A549 (cell line): ENCODE measurements at regions of chr20 and their contacts with region 1.

Region 1: GRCh38 chr20:44111712-44112335 is 75.2 kb downstream of the JPH2 start:
- DNase-seq: no peak
- ATAC-seq: no peak
- H3K4me3 ChIP-seq: no peak overlapping the region
- H3K27ac ChIP-seq: no peak overlapping the region; a peak in 1 of 6 replicates
- H3K4me1 ChIP-seq: no peaks in the 10 kb centered on the region; the same call in 2 of the 3 replicates
- CTCF ChIP-seq: no peak
- EP300 ChIP-seq: no peak
- POLR2A ChIP-seq: no peak
- RAD21 ChIP-seq: no peak

Region 2: DNA sequence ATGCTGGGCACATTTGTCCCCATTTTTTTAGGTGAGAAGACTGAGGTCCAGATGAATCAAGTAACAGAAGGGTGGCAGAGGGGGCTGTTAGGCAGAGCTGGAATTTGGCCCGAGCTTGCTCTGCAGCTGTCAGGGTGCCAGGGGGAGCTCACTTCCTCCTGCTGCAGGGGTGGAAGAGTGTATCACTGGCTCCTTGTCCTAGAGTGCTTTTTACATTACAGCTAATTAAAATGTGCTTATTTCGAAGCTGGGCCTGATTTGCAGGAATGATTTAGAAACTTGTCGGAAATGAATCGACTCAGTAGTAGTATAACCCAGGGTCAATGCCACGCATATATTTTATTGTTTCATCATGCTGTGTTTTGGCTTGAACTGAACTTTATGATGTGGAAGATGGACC is 186.0 kb before region 1 on chr20:
- CTCF ChIA-PET with region 1: no interaction called
- POLR2A ChIA-PET with region 1: no interaction called
- DNase-seq: no peak
- ATAC-seq: peak in 1 of 2 experiments; percentile 67; a peak in 3 of 6 replicates
- H3K4me3 ChIP-seq: no peak overlapping the region
- H3K27ac ChIP-seq: peak overlapping the region in 1 of 2 experiments; percentile 69; a peak in 3 of 6 replicates
- H3K4me1 ChIP-seq: peaks cover 19% of the 10 kb centered on the region
- CTCF ChIP-seq: 0 out of 3 replicates have a peak, but pooled peaks have one; percentile 7
- EP300 ChIP-seq: no peak
- POLR2A ChIP-seq: no peak
- RAD21 ChIP-seq: peak; percentile 16 to 24; a peak in 2 of 5 replicates

Region 3: GRCh38 chr20:44129911-44130718 is 18.3 kb after region 1 on chr20:
- CTCF ChIA-PET with region 1: interaction called, 65 read pairs
- POLR2A ChIA-PET with region 1: no interaction called
- DNase-seq: no peak
- ATAC-seq: peak in 1 of 2 experiments; percentile 16; a peak in 1 of 6 replicates
- H3K4me3 ChIP-seq: no peak overlapping the region
- H3K27ac ChIP-seq: no peak overlapping the region
- H3K4me1 ChIP-seq: no peaks in the 10 kb centered on the region
- CTCF ChIP-seq: no peak
- EP300 ChIP-seq: no peak
- POLR2A ChIP-seq: no peak
- RAD21 ChIP-seq: no peak

Region 4: DNA sequence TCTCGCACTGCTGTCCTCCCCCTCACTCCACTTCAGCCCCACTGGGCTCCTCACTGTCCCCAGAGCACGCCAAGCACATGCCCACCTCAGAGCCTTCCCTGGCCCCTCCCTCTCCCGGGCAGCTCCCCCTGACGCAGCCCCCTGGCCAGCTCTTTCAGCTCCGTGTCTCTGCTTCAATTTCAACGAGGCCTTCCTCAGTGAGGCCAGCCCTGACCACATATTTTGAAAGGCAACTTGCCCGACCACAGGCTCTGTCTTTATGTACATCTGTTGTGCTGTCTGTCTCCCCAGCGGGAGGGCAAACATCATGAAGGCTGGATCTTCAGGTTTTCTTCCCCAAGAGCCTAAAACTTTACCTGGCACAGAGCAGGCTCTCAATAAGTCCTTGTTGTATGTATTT is 30.6 kb after region 1 on chr20:
- CTCF ChIA-PET with region 1: interaction called, 54 read pairs
- POLR2A ChIA-PET with region 1: no interaction called
- DNase-seq: no peak
- ATAC-seq: no peak
- H3K4me3 ChIP-seq: no peak overlapping the region
- H3K27ac ChIP-seq: no peak overlapping the region
- H3K4me1 ChIP-seq: no peaks in the 10 kb centered on the region
- CTCF ChIP-seq: no peak
- EP300 ChIP-seq: no peak
- POLR2A ChIP-seq: no peak
- RAD21 ChIP-seq: no peak

Region 5: GRCh38 chr20:44160133-44160532 is 48.3 kb after region 1 on chr20:
- CTCF ChIA-PET with region 1: interaction called, 63 read pairs
- POLR2A ChIA-PET with region 1: no interaction called
- DNase-seq: no peak
- ATAC-seq: no peak
- H3K4me3 ChIP-seq: no peak overlapping the region
- H3K27ac ChIP-seq: no peak overlapping the region
- H3K4me1 ChIP-seq: peaks cover 12% of the 10 kb centered on the region
- CTCF ChIP-seq: no peak
- EP300 ChIP-seq: no peak
- POLR2A ChIP-seq: no peak
- RAD21 ChIP-seq: no peak

Region 6: DNA sequence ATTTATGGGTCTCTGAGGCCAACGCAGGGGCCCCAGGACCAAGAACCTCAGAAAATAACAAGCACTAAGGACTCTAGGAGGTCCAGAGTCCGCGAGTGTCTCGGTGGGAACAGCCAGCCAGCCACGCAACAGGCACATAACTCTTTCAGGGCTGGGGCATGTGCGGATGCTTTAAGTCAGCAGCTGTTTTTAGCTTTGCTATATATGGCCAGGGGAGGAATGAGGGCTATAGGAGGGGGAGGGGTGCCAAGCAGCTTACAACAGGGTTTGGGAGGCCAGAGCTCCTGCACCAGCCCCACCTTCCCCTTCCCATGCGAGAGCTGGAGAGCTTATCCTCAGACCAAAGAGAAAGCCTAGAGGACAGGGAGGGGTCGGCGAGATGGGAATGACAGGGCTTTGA is 69.0 kb after region 1 on chr20:
- CTCF ChIA-PET with region 1: interaction called, 54 read pairs
- POLR2A ChIA-PET with region 1: no interaction called
- DNase-seq: no peak
- ATAC-seq: no peak
- H3K4me3 ChIP-seq: no peak overlapping the region
- H3K27ac ChIP-seq: no peak overlapping the region
- H3K4me1 ChIP-seq: no peaks in the 10 kb centered on the region
- CTCF ChIP-seq: no peak
- EP300 ChIP-seq: no peak
- POLR2A ChIP-seq: no peak
- RAD21 ChIP-seq: no peak

Region 7: DNA sequence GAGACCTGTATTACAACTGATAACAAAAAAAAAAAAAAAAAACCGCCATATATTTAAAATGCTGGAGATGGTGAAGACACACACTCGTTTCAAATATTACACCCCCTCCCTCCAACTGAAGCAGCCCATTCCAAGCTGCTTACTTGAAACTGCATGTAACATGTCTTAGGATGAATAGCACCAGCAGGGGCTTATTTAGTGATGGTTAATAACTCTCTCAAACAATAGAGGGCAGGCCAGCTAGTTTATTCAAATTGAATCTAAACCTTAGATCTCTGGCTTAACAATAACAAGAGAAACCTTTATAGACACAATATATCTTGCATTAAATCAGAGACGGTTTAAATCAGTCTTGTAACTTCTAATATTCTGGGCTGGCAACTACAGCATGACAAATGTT is 84.4 kb after region 1 on chr20:
- CTCF ChIA-PET with region 1: interaction called, 460 read pairs
- POLR2A ChIA-PET with region 1: no interaction called
- DNase-seq: peak in 1 of 2 experiments; percentile 32
- ATAC-seq: peak; percentile 74 to 80
- H3K4me3 ChIP-seq: no peak overlapping the region
- H3K27ac ChIP-seq: no peak overlapping the region
- H3K4me1 ChIP-seq: peaks cover 6% of the 10 kb centered on the region
- CTCF ChIP-seq: peak; percentile 23; the same call in 1 of the 3 replicates
- EP300 ChIP-seq: no peak
- POLR2A ChIP-seq: no peak
- RAD21 ChIP-seq: no peak

Region 8: DNA sequence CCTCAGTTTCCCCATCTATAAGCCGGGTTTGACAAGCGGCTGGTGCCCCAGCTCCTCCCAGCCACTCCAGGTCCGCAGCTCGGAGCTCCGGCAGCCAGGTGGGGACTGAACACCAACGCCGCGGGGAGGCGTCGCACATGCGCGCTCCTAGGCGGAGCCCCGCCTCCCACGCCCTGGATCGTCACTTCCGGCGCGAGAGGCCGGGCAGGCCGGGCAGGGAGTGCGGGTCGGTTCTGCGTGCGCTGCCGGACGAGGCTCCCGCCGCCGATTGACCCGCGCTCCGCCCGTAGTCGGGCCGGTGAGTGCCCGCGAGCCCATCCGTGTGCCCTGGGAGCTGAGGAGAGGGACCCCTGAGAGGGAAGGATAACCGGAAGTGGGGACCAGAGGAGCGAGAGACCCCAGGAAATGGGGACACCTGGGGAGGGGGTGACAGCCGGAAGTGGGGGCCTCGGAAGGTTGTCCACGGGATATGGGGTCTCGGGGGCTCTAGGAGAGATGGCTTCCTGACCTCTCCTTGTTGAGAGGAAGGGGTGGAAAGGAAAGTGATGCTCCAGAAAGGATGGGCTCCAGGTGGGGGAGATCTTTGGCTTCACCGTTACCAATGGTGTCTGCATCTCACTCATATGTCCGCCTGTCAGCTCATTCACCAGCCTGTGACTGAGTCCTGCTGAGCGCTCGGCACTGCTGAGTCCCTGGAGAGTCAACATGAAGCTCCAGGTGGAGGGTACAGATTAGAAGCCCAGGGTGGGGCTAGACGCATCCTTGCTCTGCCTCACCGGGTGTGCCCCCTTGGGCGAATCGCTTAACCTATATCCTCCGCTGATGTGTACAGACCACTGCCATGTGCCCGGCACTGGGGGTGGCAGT is 364.1 kb after region 1 on chr20 and contains the start of gene TTPAL:
- CTCF ChIA-PET with region 1: interaction called, 13 read pairs
- POLR2A ChIA-PET with region 1: no interaction called
- DNase-seq: peak; percentile 81 to 88
- ATAC-seq: peak; percentile 98
- H3K4me3 ChIP-seq: peak within 1 kb of the TSS; percentile 92
- H3K27ac ChIP-seq: peak within 1 kb of the TSS; percentile 91 to 95
- H3K4me1 ChIP-seq: peaks cover 12% of the 10 kb centered on the region; the same call in 2 of the 3 replicates
- CTCF ChIP-seq: peak; percentile 20; the same call in 2 of the 3 replicates
- EP300 ChIP-seq: no peak
- POLR2A ChIP-seq: peak; percentile 99
- RAD21 ChIP-seq: peak; percentile 9 to 48; a peak in 2 of 5 replicates
- polyA plus RNA-seq, gene TTPAL: 9.2 and 11.0 TPM in 2 replicates